Thyroid gland (tissue), 4 donors: ENCODE measurements at regions of chr10 and their contacts with region 1.

Region 1: DNA sequence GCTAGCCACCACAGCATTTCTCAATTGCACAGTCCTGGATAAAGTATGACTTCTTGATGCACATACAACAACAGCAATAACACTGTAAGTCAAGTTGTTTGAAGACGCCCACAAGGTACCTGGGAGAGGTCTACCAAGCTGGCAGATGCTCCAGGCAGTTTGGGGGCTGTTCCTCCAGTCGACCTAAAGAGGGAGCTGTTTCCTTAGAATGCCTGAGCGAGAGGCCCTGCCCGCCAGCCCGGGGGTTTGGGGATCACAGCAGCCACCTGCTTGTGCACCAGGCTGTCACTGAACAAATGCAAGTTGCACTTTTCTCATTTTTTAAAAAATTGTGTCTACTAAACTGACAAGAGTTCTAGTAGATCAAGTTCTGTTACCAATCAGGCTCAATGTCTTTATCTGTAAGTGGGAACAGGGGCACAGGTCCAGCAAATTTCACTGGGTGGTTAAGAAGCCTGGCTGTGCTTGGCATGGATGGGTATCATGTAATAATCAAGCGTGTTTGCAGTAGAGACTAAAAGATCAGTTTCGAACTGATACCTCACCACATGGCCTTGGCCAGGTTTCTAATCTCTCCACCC is 193.8 kb upstream of the ADO start:
- DNase-seq: peak; percentile 69 to 73
- H3K4me3 ChIP-seq: no peak overlapping the region
- H3K27ac ChIP-seq: no peak overlapping the region
- H3K4me1 ChIP-seq: no peaks in the 10 kb centered on the region
- H3K27me3 ChIP-seq: no peaks in the 10 kb centered on the region
- CTCF ChIP-seq: peak; percentile 46 to 88 (median 78)
- POLR2A ChIP-seq: no peak

Region 2: GRCh38 chr10:62199584-62199983 is 411.2 kb before region 1 on chr10:
- intact Hi-C with region 1: no loop called
- DNase-seq: no peak
- H3K4me3 ChIP-seq: no peak overlapping the region
- H3K27ac ChIP-seq: no peak overlapping the region
- H3K4me1 ChIP-seq: no peaks in the 10 kb centered on the region
- H3K27me3 ChIP-seq: no peaks in the 10 kb centered on the region
- CTCF ChIP-seq: no peak
- POLR2A ChIP-seq: no peak

Region 3: DNA sequence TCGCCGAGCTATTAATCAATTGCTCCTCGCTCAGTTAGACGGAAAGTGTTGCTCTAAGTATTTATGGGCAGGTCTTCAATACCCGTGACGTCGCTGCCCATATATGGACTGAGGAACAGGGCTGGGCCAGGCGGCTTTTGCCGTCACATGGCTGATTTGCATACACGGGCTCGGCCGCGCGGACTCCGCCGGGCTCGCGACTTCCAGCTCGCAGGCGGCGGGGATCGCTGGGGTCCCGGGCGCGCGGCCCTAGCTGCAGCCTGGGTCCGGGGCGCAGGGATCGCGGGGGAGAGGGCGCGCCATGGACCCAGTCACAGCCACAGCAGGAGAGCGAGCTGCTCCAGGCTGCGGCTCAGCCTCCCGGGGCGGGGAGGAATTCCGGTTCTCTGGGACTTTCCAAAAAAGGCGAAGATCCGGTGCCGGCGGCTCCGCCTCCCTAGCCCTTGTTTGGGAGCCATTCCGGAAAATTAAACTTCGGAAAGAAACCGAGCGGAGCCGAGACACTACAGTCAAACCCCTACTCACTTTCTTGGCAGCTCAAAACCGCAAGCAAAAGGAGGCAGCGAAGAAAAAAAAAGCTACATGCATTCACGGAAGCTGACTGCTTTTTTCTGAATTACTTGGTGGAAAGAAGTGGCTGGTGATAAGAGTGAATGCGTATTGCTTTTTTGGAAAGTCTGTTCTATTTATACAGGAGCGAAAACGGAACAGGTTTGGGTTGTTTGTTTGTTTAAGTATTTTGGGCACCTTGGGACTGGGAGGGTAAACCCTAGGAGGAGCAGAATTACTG is 205.8 kb after region 1 on chr10 and contains the start of gene EGR2:
- intact Hi-C with region 1: loop called (anchors 10 kb)
- DNase-seq: peak; percentile 96
- H3K4me3 ChIP-seq: peak within 1 kb of the TSS; percentile 17 to 79 (median 75)
- H3K27ac ChIP-seq: peak within 1 kb of the TSS; percentile 72 to 97 (median 90)
- H3K4me1 ChIP-seq: peaks cover 33 to 36% of the 10 kb centered on the region in 2 donors
- H3K27me3 ChIP-seq: no peaks in the 10 kb centered on the region
- CTCF ChIP-seq: no peak
- POLR2A ChIP-seq: peak in 1 of 2 donors; percentile 63
- total RNA-seq, gene EGR2: 0.78 to 14.6 (median 2.9) TPM

Region 4: GRCh38 chr10:63157845-63158624 is 547.3 kb after region 1 on chr10:
- intact Hi-C with region 1: loop called (anchors 10 kb)
- DNase-seq: peak in 1 of 2 donors; percentile 30
- H3K4me3 ChIP-seq: no peak overlapping the region
- H3K27ac ChIP-seq: no peak overlapping the region
- H3K4me1 ChIP-seq: no peaks in the 10 kb centered on the region
- H3K27me3 ChIP-seq: no peaks in the 10 kb centered on the region
- CTCF ChIP-seq: peak; percentile 27 to 86 (median 70)
- POLR2A ChIP-seq: no peak